CD4-positive, alpha-beta memory T cell (primary cell): ENCODE measurements at regions of chr2 and their contacts with region 1.

Region 1: GRCh38 chr2:191150600-191151330 is at the start of gene STAT4:
- DNase-seq: peak; percentile 87 to 95 (median 89)
- H3K4me3 ChIP-seq: peak within 1 kb of the TSS; percentile 89 to 92
- H3K4me3 Mint-ChIP-seq: peak within 1 kb of the TSS; percentile 81 to 98 (median 96)
- H3K27ac ChIP-seq: peak within 1 kb of the TSS; percentile 99
- H3K27ac Mint-ChIP-seq: peak within 1 kb of the TSS; percentile 93 to 100 (median 98)
- H3K4me1 ChIP-seq: peaks cover 42% of the 10 kb centered on the region
- H3K4me1 Mint-ChIP-seq: peaks cover 31 to 74% (median 48%) of the 10 kb centered on the region in 4 donors
- H3K27me3 ChIP-seq: no peaks in the 10 kb centered on the region
- H3K27me3 Mint-ChIP-seq: no peaks in the 10 kb centered on the region
- total RNA-seq, gene STAT4: 114 to 119 TPM

Region 2: GRCh38 chr2:190511104-190511503 is 639.7 kb before region 1 on chr2:
- CTCF ChIA-PET with region 1: no interaction called
- POLR2A ChIA-PET with region 1: no interaction called
- intact Hi-C with region 1: no loop called
- DNase-seq: no peak
- H3K4me3 ChIP-seq: no peak overlapping the region
- H3K4me3 Mint-ChIP-seq: no peak overlapping the region
- H3K27ac ChIP-seq: no peak overlapping the region
- H3K27ac Mint-ChIP-seq: peak overlapping the region in 1 of 7 donors; percentile 18
- H3K4me1 ChIP-seq: peaks cover 15% of the 10 kb centered on the region
- H3K4me1 Mint-ChIP-seq: peaks cover 7 to 20% (median 16%) of the 10 kb centered on the region in 4 donors
- H3K27me3 ChIP-seq: no peaks in the 10 kb centered on the region
- H3K27me3 Mint-ChIP-seq: no peaks in the 10 kb centered on the region

Region 3: GRCh38 chr2:190880378-190881073 is 270.2 kb before region 1 on chr2 and contains the start of gene GLS:
- CTCF ChIA-PET with region 1: no interaction called
- POLR2A ChIA-PET with region 1: interaction called, 46 read pairs
- intact Hi-C with region 1: loop called (anchors 1 kb)
- DNase-seq: peak; percentile 94 to 98 (median 97)
- H3K4me3 ChIP-seq: peak within 1 kb of the TSS; percentile 88 to 94
- H3K4me3 Mint-ChIP-seq: peak within 1 kb of the TSS; percentile 96 to 99 (median 98)
- H3K27ac ChIP-seq: peak within 1 kb of the TSS; percentile 93
- H3K27ac Mint-ChIP-seq: peak within 1 kb of the TSS; percentile 96 to 99 (median 99)
- H3K4me1 ChIP-seq: peaks cover 54% of the 10 kb centered on the region
- H3K4me1 Mint-ChIP-seq: peaks cover 33 to 72% (median 45%) of the 10 kb centered on the region in 4 donors
- H3K27me3 ChIP-seq: no peaks in the 10 kb centered on the region
- H3K27me3 Mint-ChIP-seq: no peaks in the 10 kb centered on the region
- total RNA-seq, gene GLS: 200 to 208 TPM

Region 4: DNA sequence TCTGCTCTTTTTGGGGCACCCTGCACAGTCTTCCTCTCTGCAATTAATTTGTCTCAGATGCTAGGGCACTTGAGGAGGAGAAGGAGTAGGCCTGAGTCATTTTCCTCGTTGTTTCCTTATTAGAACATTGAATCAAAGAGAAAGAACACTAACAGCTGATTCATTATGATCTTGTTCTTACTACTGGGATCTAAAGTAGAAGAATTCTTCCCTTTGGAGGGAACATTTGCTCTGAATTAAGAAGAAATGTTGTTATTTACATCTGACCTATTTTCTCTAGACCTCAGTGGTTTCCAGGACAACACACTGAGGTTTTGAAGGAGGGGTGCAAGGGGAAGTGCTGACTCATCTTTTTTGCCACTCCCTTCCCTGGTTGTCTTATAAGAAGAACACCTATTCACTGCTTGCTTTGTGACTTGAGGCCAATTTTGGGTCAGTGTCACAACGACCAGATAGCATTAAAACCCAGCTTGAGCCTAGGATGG is 112.5 kb before region 1 on chr2:
- CTCF ChIA-PET with region 1: interaction called, 18 read pairs
- POLR2A ChIA-PET with region 1: interaction called, 11 read pairs
- intact Hi-C with region 1: no loop called
- DNase-seq: peak; percentile 49 to 75 (median 63)
- H3K4me3 ChIP-seq: no peak overlapping the region
- H3K4me3 Mint-ChIP-seq: peak overlapping the region in 7 of 8 donors; percentile 33 to 84 (median 65)
- H3K27ac ChIP-seq: peak overlapping the region; percentile 39
- H3K27ac Mint-ChIP-seq: peak overlapping the region; percentile 87 to 98 (median 91)
- H3K4me1 ChIP-seq: peaks cover 31% of the 10 kb centered on the region
- H3K4me1 Mint-ChIP-seq: peaks cover 27 to 37% (median 36%) of the 10 kb centered on the region in 4 donors
- H3K27me3 ChIP-seq: no peaks in the 10 kb centered on the region
- H3K27me3 Mint-ChIP-seq: no peaks in the 10 kb centered on the region

Region 5: DNA sequence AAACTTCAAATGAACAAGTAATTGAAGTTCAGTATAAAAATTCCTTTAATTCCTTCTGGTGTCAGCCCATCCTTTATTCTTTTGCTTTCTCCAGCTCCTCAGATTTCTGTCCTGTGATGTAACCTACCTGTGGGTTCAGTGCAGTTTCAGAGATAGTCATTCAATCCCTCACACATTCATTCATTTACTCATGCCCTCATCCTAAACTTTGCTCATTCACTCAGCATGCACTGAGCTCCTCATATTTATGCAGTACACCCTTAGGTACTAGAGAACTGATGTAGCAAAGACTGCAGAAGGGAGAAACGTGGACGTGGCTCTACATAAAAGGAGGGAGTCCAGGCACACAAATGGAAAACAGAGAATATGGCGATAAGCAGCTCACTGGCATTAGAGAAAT is 91.5 kb before region 1 on chr2:
- CTCF ChIA-PET with region 1: interaction called, 567 read pairs
- POLR2A ChIA-PET with region 1: interaction called, 91 read pairs
- intact Hi-C with region 1: no loop called
- DNase-seq: no peak
- H3K4me3 ChIP-seq: no peak overlapping the region
- H3K4me3 Mint-ChIP-seq: peak overlapping the region in 2 of 8 donors; percentile 1 to 6
- H3K27ac ChIP-seq: no peak overlapping the region
- H3K27ac Mint-ChIP-seq: peak overlapping the region; percentile 6 to 88 (median 69)
- H3K4me1 ChIP-seq: peaks cover 68% of the 10 kb centered on the region
- H3K4me1 Mint-ChIP-seq: peaks cover 49 to 70% (median 62%) of the 10 kb centered on the region in 4 donors
- H3K27me3 ChIP-seq: no peaks in the 10 kb centered on the region
- H3K27me3 Mint-ChIP-seq: no peaks in the 10 kb centered on the region

Region 6: DNA sequence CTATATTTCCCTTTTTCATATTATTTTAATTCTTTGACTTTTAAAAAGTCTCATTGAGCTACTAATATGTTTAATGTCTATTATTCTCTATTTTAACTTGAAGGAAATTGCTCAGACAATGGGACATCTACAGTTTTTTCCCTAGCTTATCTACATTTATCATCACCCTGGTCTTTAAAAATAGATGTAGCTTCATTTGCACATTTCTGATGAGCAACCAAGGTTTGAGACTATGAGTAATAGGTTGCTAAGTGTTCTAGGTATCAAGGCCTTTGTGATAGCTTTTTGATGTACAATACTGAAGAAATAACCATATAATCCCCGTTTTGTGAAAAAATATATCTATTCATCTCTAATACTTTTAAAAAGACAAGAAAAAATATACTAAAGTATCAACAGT is 47.0 kb before region 1 on chr2:
- CTCF ChIA-PET with region 1: interaction called, 10 read pairs
- POLR2A ChIA-PET with region 1: interaction called, 13 read pairs
- intact Hi-C with region 1: no loop called
- DNase-seq: no peak
- H3K4me3 ChIP-seq: no peak overlapping the region
- H3K4me3 Mint-ChIP-seq: no peak overlapping the region
- H3K27ac ChIP-seq: no peak overlapping the region
- H3K27ac Mint-ChIP-seq: no peak overlapping the region
- H3K4me1 ChIP-seq: peaks cover 18% of the 10 kb centered on the region
- H3K4me1 Mint-ChIP-seq: peaks cover 10 to 52% (median 30%) of the 10 kb centered on the region in 4 donors
- H3K27me3 ChIP-seq: no peaks in the 10 kb centered on the region
- H3K27me3 Mint-ChIP-seq: no peaks in the 10 kb centered on the region

Region 7: DNA sequence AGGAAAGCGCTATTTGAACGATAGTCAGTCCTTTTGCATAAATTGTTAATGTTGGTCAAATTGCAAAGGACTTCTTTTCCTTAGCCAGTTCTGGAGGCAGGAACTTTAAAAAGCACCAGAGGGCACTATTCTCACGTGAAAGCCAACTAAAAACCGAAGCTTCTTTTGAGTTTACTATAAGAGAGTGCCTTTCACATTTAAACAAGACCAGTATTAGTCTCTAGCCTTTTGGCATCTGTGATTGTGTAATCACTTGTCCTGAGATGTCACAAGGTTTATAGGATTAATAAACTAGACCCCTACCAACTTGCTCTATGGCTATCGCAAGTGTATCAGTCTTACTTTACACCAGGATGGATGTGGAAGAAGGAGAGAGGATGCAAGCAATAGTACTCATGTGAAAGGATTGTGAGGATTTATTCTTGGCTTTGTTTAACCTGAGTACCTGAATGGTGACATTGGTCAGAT is 14.4 kb after region 1 on chr2:
- CTCF ChIA-PET with region 1: interaction called, 38 read pairs
- POLR2A ChIA-PET with region 1: no interaction called
- intact Hi-C with region 1: no loop called
- DNase-seq: peak in 4 of 5 donors; percentile 45 to 57 (median 48)
- H3K4me3 ChIP-seq: no peak overlapping the region
- H3K4me3 Mint-ChIP-seq: no peak overlapping the region
- H3K27ac ChIP-seq: no peak overlapping the region
- H3K27ac Mint-ChIP-seq: peak overlapping the region in 2 of 7 donors; percentile 54 to 77
- H3K4me1 ChIP-seq: no peaks in the 10 kb centered on the region
- H3K4me1 Mint-ChIP-seq: peaks cover 5 to 6% (median 6%) of the 10 kb centered on the region in 4 donors
- H3K27me3 ChIP-seq: no peaks in the 10 kb centered on the region
- H3K27me3 Mint-ChIP-seq: peaks cover 0 to under 1% of the 10 kb centered on the region in 2 donors